Heart left ventricle (tissue), 16 donors: ENCODE measurements at regions of chr13 and their contacts with region 1.

Region 1: DNA sequence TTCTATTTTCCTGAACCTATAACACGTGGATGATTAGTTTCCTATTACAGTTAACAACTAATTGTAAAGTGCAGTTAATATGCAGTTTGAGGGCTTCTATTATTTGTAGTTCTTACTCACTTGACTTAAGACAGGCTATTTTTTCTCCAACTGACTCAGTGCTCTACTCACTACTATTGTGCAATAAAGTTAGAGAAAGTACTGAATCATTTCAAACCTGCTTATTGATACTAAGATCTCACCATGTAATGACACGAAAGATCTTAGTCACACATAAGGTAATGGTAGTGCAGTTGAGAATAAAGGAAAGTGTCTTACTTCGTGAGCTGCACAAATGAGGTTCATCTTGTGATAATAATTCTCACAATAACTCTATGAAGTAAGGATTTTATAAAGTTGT is 22.8 kb upstream of the ITM2B start:
- DNase-seq: no peak
- ATAC-seq: no peak
- H3K4me3 ChIP-seq: no peak overlapping the region
- H3K27ac ChIP-seq: no peak overlapping the region
- H3K4me1 ChIP-seq: peaks cover 0 to 8% (median 0%) of the 10 kb centered on the region in 12 donors
- H3K27me3 ChIP-seq: no peaks in the 10 kb centered on the region
- CTCF ChIP-seq: no peak
- POLR2A ChIP-seq: no peak

Region 2: DNA sequence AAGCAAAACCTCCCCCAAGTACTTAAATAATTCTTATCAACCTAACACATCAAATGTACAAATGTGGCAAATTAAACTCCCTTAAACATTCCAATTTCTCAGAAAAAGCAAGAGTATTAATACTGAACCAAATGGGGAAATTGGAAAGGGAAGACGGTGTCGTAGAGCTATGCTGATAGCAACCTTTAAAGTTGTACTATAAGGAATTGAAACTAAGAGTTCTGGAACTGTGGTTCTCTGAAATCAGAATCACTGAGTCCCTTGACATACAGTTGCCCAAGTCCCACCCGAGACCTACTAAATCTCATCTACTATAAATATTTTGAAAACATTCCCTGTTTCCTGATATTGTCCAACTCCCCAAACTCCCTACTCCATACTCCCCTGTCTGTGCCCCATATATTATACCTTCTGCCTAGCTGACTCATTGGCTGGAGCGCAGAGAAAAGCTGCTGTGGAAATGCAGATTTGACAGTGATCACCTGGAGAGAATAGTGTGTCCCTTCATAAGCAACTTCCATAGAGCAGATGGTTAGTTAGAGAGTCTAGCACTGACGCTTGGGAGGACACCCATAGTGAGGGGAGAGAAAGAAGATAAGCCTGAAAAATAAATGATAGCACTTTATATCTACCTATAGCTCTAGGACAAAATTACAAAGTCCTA is 28.6 kb before region 1 on chr13:
- intact Hi-C with region 1: loop called in 1 of 10 experiments (anchors 2 kb)
- DNase-seq: no peak
- ATAC-seq: no peak
- H3K4me3 ChIP-seq: no peak overlapping the region
- H3K27ac ChIP-seq: no peak overlapping the region
- H3K4me1 ChIP-seq: peaks cover 0 to 31% (median 0%) of the 10 kb centered on the region in 12 donors
- H3K27me3 ChIP-seq: no peaks in the 10 kb centered on the region
- CTCF ChIP-seq: no peak
- POLR2A ChIP-seq: no peak